ENCODE measurements at regions of chr20 and their contacts with region 1.

Region 1: GRCh38 chr20:41395667-41396664 is 29.3 kb upstream of the EMILIN3 start:
- DNase-seq: no peak
- ATAC-seq: peak; percentile 37
- H3K4me3 ChIP-seq: no peak overlapping the region
- H3K27ac ChIP-seq: no peak overlapping the region
- H3K4me1 ChIP-seq: no peaks in the 10 kb centered on the region
- H3K27me3 ChIP-seq: no peaks in the 10 kb centered on the region

Region 2: DNA sequence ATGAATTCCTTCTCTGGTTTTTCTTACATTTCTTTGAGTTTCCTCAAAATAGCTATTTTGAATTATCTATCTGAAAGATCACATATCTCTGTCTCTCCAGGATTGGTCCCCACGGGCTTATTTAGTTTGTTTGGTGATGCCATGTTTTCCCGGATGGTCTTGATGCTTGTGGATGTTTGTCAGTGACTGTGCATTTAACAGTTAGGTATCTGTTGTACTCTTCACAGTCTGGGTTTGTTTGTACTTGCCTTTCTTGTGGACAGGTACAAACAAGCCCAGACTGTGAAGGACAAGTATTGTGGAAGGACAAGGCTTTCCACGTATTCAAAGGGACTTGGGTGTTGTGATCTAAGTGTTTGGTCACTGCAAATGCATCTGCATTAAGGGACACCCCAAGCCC is 417.2 kb before region 1 on chr20:
- intact Hi-C with region 1: loop called in 1 of 2 experiments (anchors 5 kb)
- DNase-seq: no peak
- ATAC-seq: no peak
- H3K4me3 ChIP-seq: no peak overlapping the region
- H3K27ac ChIP-seq: no peak overlapping the region
- H3K4me1 ChIP-seq: no peaks in the 10 kb centered on the region
- H3K27me3 ChIP-seq: no peaks in the 10 kb centered on the region

Measured in aorta (tissue), 5 donors.